Activated CD4-positive, alpha-beta T cell treated with anti-CD3 and anti-CD28 coated beads, Interleukin-2, amount 10 ng/mL, durations not matched to agents 24 days and 14 days (primary cell): ENCODE measurements at regions of chr15 and their contacts with region 1.

Region 1: GRCh38 chr15:90143166-90143655 is 40.9 kb upstream of the IDH2 start:
- DNase-seq: peak; percentile 92
- H3K4me3 Mint-ChIP-seq: peak overlapping the region; percentile 66
- H3K27ac Mint-ChIP-seq: peak overlapping the region; percentile 81
- H3K4me1 Mint-ChIP-seq: peaks cover 29% of the 10 kb centered on the region
- H3K27me3 Mint-ChIP-seq: no peaks in the 10 kb centered on the region

Region 2: GRCh38 chr15:90099868-90100831 is 43.1 kb before region 1 on chr15:
- intact Hi-C with region 1: loop called (anchors 5 kb)
- DNase-seq: peak; percentile 74
- H3K4me3 Mint-ChIP-seq: peak overlapping the region; percentile 86
- H3K27ac Mint-ChIP-seq: peak overlapping the region; percentile 98
- H3K4me1 Mint-ChIP-seq: peaks cover 70% of the 10 kb centered on the region
- H3K27me3 Mint-ChIP-seq: peaks cover 8% of the 10 kb centered on the region

Region 3: GRCh38 chr15:90209591-90209990 is 66.4 kb after region 1 on chr15:
- intact Hi-C with region 1: no loop called
- DNase-seq: no peak
- H3K4me3 Mint-ChIP-seq: peak overlapping the region; percentile 25
- H3K27ac Mint-ChIP-seq: peak overlapping the region; percentile 81
- H3K4me1 Mint-ChIP-seq: peaks cover 20% of the 10 kb centered on the region
- H3K27me3 Mint-ChIP-seq: no peaks in the 10 kb centered on the region

Region 4: DNA sequence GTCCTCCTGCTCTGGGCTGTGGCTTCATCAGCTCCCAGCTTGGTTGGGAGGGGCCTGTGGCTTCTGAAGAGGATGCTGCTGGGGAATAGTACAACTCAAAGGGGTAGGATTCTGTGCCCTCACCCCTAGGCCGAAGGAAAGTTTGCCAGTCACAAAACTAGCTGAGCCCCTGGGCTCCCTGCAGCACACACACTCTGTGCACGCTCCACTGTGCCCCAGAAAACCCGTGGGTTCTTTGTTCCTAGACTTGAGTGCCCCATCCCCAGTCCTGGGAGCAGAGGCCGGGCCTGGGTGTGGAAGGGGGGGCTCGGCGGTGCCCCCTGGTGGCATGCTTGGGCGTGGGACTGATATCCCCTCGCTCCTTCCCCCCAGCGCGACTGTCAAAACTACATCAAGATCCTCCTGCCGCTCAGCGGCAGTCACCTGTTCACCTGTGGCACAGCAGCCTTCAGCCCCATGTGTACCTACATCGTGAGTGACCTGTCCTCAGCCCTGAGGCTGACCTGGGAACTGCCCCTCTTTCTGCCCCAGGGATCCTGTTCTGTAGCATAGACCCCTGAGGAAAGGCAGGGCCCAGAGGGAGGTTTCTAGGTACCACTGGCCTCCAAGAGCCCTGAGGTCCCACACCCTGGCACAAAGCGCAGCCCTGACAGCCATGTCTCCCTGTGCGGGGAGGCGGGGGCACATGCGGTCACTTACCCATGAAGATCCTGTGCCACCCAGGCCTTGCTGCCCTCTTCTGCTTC is 76.4 kb after region 1 on chr15:
- intact Hi-C with region 1: loop called (anchors 1 kb)
- DNase-seq: peak; percentile 83
- H3K4me3 Mint-ChIP-seq: no peak overlapping the region
- H3K27ac Mint-ChIP-seq: no peak overlapping the region
- H3K4me1 Mint-ChIP-seq: peaks cover 16% of the 10 kb centered on the region
- H3K27me3 Mint-ChIP-seq: no peaks in the 10 kb centered on the region

Region 5: GRCh38 chr15:90286678-90287077 is 143.5 kb after region 1 on chr15:
- intact Hi-C with region 1: loop called (anchors 5 kb)
- DNase-seq: peak; percentile 79
- H3K4me3 Mint-ChIP-seq: no peak overlapping the region
- H3K27ac Mint-ChIP-seq: no peak overlapping the region
- H3K4me1 Mint-ChIP-seq: no peaks in the 10 kb centered on the region
- H3K27me3 Mint-ChIP-seq: no peaks in the 10 kb centered on the region

Region 6: GRCh38 chr15:90419738-90420406 is 276.7 kb after region 1 on chr15:
- intact Hi-C with region 1: no loop called
- DNase-seq: peak; percentile 74
- H3K4me3 Mint-ChIP-seq: peak overlapping the region; percentile 62
- H3K27ac Mint-ChIP-seq: peak overlapping the region; percentile 88
- H3K4me1 Mint-ChIP-seq: peaks cover 52% of the 10 kb centered on the region
- H3K27me3 Mint-ChIP-seq: no peaks in the 10 kb centered on the region